WTC11 (cell line): ENCODE measurements at regions of chr4 and their contacts with region 1.

Region 1: DNA sequence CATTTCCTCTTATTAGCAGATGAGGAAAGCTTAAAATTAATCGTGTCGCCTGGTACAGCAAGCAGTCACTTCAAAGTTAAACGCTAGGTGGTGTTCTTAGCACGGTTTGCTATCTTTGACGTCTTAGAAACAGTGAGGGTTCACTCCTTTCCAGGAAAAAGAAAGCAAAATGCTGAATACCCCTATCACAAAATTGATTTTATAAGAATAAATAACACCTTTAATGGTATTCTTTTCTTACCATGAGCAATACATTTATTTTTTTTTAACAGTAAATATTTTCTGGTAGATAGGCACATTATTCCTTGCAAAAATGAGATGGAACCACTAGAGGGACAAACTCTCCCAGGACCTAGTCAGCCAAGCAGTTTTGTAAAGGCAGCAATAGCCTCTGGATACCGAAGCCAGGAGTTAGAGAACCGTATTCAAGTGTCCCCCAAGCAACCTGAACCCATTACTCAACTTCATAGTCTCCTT is 153.9 kb downstream of the KDR start:
- DNase-seq: no peak
- ATAC-seq: peak; percentile 88
- H3K4me3 Mint-ChIP-seq: no peak overlapping the region
- H3K27ac Mint-ChIP-seq: no peak overlapping the region
- H3K4me1 Mint-ChIP-seq: peaks cover 8% of the 10 kb centered on the region
- H3K27me3 Mint-ChIP-seq: no peaks in the 10 kb centered on the region; the same call in 1 of the 2 replicates
- CTCF ChIP-seq: no peak

Region 2: GRCh38 chr4:54742636-54743399 is 228.7 kb before region 1 on chr4:
- CTCF ChIA-PET with region 1: no interaction called
- POLR2A ChIA-PET with region 1: no interaction called
- DNase-seq: no peak
- ATAC-seq: peak; percentile 74
- H3K4me3 Mint-ChIP-seq: no peak overlapping the region
- H3K27ac Mint-ChIP-seq: peak overlapping the region; percentile 43; the same call in 1 of the 2 replicates
- H3K4me1 Mint-ChIP-seq: peaks cover 27% of the 10 kb centered on the region
- H3K27me3 Mint-ChIP-seq: no peaks in the 10 kb centered on the region; the same call in 1 of the 2 replicates
- CTCF ChIP-seq: no peak

Region 3: GRCh38 chr4:54986095-54986846 is 14.8 kb after region 1 on chr4:
- CTCF ChIA-PET with region 1: interaction called, 21 read pairs
- POLR2A ChIA-PET with region 1: no interaction called
- DNase-seq: peak; percentile 55
- ATAC-seq: peak; percentile 99
- H3K4me3 Mint-ChIP-seq: no peak overlapping the region
- H3K27ac Mint-ChIP-seq: peak overlapping the region; percentile 96
- H3K4me1 Mint-ChIP-seq: peaks cover 20% of the 10 kb centered on the region
- H3K27me3 Mint-ChIP-seq: no peaks in the 10 kb centered on the region
- CTCF ChIP-seq: no peak

Region 4: DNA sequence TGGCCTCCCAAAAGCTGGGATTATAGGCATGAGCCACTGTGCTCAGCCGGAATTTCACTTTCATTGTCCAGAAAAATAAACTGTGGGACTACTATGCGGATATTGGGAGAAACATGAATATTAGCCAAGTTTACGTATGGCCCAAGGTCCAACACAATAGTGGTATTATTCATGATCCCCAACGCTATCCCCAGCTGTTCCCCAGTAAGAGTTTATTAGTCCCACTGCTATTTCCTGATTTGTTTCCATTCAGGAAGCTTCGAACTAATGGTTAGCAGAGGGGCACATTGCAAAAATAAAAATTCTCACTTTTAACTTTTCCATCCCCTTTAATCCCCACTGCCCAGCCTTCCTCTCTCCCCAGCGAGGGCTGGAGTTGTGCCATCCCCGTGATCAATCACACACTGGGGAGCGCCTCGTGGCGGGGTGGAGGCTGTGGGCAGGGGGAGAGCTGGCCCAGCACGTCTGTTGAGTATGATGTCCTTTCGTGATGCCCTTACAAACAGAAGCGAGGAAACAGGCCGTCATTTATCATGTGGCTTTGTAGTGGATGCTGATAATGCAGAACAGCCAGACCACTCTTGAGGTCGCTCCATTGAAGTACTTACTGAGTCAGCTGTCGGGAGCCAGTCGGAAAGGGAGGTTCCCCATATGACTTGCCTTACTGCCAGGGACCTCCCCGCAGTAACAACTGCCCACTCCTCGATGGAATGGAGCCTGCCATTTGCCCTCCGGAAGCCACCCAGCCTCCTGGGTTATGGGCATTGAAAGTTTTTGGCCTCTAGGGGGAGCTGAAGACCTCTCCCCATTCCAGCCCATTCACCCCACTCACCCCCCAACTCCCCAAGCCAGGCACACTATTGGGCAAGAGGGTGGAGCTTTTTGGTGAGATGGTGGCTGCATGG is 36.9 kb after region 1 on chr4:
- CTCF ChIA-PET with region 1: interaction called, 11 read pairs
- POLR2A ChIA-PET with region 1: no interaction called
- DNase-seq: peak; percentile 60
- ATAC-seq: peak; percentile 91
- H3K4me3 Mint-ChIP-seq: no peak overlapping the region
- H3K27ac Mint-ChIP-seq: no peak overlapping the region
- H3K4me1 Mint-ChIP-seq: peaks cover 10% of the 10 kb centered on the region
- H3K27me3 Mint-ChIP-seq: no peaks in the 10 kb centered on the region
- CTCF ChIP-seq: peak; percentile 68

Region 5: GRCh38 chr4:55321707-55322264 is 350.3 kb after region 1 on chr4:
- CTCF ChIA-PET with region 1: interaction called, 18 read pairs
- POLR2A ChIA-PET with region 1: no interaction called
- DNase-seq: peak; percentile 83
- ATAC-seq: peak; percentile 84
- H3K4me3 Mint-ChIP-seq: peak overlapping the region; percentile 26
- H3K27ac Mint-ChIP-seq: peak overlapping the region; percentile 85
- H3K4me1 Mint-ChIP-seq: peaks cover 50% of the 10 kb centered on the region
- H3K27me3 Mint-ChIP-seq: no peaks in the 10 kb centered on the region
- CTCF ChIP-seq: peak; percentile 41